ENCODE measurements at regions of chrX and their contacts with region 1.

Region 1: GRCh38 chrX:123357941-123358340 is 173.9 kb downstream of the GRIA3 start:
- DNase-seq: peak; percentile 41
- ATAC-seq: peak; percentile 95
- H3K4me3 ChIP-seq: no peak overlapping the region
- H3K27ac ChIP-seq: no peak overlapping the region; the same call in 1 of the 2 replicates
- H3K4me1 ChIP-seq: no peaks in the 10 kb centered on the region
- H3K27me3 ChIP-seq: no peaks in the 10 kb centered on the region
- CTCF ChIP-seq: no peak
- EP300 ChIP-seq: peak in 1 of 2 experiments; percentile 61; a peak in 1 of 4 replicates
- POLR2A ChIP-seq: no peak
- RAD21 ChIP-seq: 0 out of 2 replicates have a peak, but pooled peaks have one; percentile 5

Region 2: GRCh38 chrX:123277821-123278423 is 80.0 kb before region 1 on chrX:
- CTCF ChIA-PET with region 1: interaction called, 4 read pairs
- POLR2A ChIA-PET with region 1: no interaction called
- RAD21 ChIA-PET with region 1: interaction called, 3 read pairs
- SMC1A ChIA-PET with region 1: interaction called, 10 read pairs
- in situ Hi-C with region 1: no loop called
- intact Hi-C with region 1: no loop called
- DNase-seq: no peak
- ATAC-seq: peak; percentile 59
- H3K4me3 ChIP-seq: no peak overlapping the region
- H3K27ac ChIP-seq: no peak overlapping the region
- H3K4me1 ChIP-seq: no peaks in the 10 kb centered on the region
- H3K27me3 ChIP-seq: no peaks in the 10 kb centered on the region
- CTCF ChIP-seq: peak; percentile 11 to 21 (median 11); a peak in 3 of 6 replicates
- EP300 ChIP-seq: no peak
- POLR2A ChIP-seq: no peak
- RAD21 ChIP-seq: peak; percentile 28; the same call in 1 of the 2 replicates

Region 3: GRCh38 chrX:123330229-123330942 is 27.6 kb before region 1 on chrX:
- CTCF ChIA-PET with region 1: interaction called, 8 read pairs
- POLR2A ChIA-PET with region 1: interaction called, 9 read pairs
- RAD21 ChIA-PET with region 1: interaction called, 58 read pairs
- SMC1A ChIA-PET with region 1: interaction called, 72 read pairs
- in situ Hi-C with region 1: no loop called
- intact Hi-C with region 1: no loop called
- DNase-seq: no peak
- ATAC-seq: peak; percentile 97
- H3K4me3 ChIP-seq: no peak overlapping the region
- H3K27ac ChIP-seq: no peak overlapping the region
- H3K4me1 ChIP-seq: peaks cover 6% of the 10 kb centered on the region
- H3K27me3 ChIP-seq: no peaks in the 10 kb centered on the region
- CTCF ChIP-seq: no peak
- EP300 ChIP-seq: no peak
- POLR2A ChIP-seq: no peak
- RAD21 ChIP-seq: no peak

Region 4: GRCh38 chrX:123399709-123400108 is 41.8 kb after region 1 on chrX:
- CTCF ChIA-PET with region 1: interaction called, 3 read pairs
- POLR2A ChIA-PET with region 1: interaction called, 82 read pairs
- RAD21 ChIA-PET with region 1: interaction called, 10 read pairs
- SMC1A ChIA-PET with region 1: interaction called, 208 read pairs
- in situ Hi-C with region 1: no loop called
- intact Hi-C with region 1: no loop called
- DNase-seq: no peak
- ATAC-seq: no peak
- H3K4me3 ChIP-seq: no peak overlapping the region
- H3K27ac ChIP-seq: no peak overlapping the region
- H3K4me1 ChIP-seq: no peaks in the 10 kb centered on the region
- H3K27me3 ChIP-seq: no peaks in the 10 kb centered on the region
- CTCF ChIP-seq: no peak
- EP300 ChIP-seq: no peak
- POLR2A ChIP-seq: no peak
- RAD21 ChIP-seq: no peak